H1 (cell line): ENCODE measurements at regions of chr19 and their contacts with region 1.

Region 1: DNA sequence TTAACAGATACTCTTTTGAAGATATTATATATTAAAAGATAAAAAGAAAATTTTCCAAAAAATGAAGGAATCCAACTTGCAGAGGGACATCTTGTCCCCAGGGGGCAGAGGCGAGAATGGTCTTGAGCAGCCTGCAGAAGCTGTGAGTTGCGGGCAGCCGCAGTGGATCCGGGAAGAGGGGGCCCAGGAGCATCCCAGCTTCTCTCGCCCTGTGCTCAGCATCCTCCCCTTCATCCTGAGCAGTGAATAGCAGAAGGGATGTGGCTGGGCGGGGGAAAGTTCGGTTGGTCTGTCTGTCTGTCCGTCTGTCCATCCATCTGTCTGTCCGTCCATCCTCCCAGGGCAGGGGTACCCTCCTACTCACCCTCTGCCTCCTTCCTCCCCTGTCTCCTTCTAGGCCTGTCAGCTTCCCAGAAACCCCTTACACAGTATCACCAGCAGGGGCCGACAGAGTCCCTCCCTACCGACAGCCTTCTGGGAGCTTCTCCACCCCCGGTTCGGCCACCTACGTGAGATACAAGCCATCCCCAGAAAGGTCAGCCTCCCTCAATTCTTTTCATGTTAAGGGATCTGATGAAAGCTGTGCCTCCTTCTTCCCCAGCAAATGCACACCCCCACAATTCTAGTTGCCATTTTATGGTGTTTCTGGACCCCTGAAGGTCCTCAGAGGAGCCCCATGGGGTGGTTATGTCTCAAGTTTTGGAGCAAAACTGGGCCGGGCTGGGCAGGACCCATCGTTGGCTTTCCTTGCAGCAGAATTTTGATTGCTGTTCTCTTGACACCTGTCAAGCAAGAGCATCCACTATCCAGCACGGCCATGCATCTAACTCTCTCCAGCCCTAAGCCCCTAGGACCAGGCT is 81.6 kb downstream of the DPF1 start:
- DNase-seq: peak; percentile 41 to 85
- H3K4me3 ChIP-seq: no peak overlapping the region
- H3K27ac ChIP-seq: no peak overlapping the region
- H3K4me1 ChIP-seq: no peaks in the 10 kb centered on the region; a peak in 1 of 7 replicates
- H3K27me3 ChIP-seq: no peaks in the 10 kb centered on the region
- CTCF ChIP-seq: peak; percentile 88 to 95 (median 92)
- EP300 ChIP-seq: no peak
- POLR2A ChIP-seq: no peak
- RAD21 ChIP-seq: peak; percentile 89 to 94

Region 2: GRCh38 chr19:38033658-38034498 is 108.5 kb before region 1 on chr19:
- CTCF ChIA-PET with region 1: no interaction called
- POLR2A ChIA-PET with region 1: no interaction called
- DNase-seq: peak in 1 of 2 experiments; percentile 25
- H3K4me3 ChIP-seq: no peak overlapping the region
- H3K27ac ChIP-seq: peak overlapping the region; percentile 16; the same call in 1 of the 2 replicates
- H3K4me1 ChIP-seq: peaks cover 7 to 19% (median 14%) of the 10 kb centered on the region in 4 experiments
- H3K27me3 ChIP-seq: no peaks in the 10 kb centered on the region
- CTCF ChIP-seq: peak; percentile 32 to 55 (median 41)
- EP300 ChIP-seq: no peak
- POLR2A ChIP-seq: no peak
- RAD21 ChIP-seq: peak; percentile 40 to 48; a peak in 3 of 4 replicates

Region 3: DNA sequence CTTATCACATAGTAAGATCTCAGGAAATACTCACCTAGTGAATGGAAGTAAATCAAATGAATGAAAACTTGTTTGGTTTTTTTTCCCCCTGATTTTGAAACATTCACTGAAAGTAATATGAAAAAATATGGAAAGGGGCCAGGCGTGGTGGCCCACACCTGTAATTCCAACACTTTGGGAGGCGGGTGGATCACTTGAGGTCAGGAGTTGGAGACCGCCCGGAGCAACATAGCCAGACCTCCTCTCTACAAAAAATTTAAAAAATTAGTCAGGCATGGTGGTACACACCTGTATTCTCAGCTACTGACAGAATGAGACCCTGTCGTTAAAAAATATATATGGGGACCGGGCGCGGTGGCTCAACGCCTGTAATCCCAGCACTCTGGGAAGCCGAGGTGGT is 85.8 kb before region 1 on chr19:
- CTCF ChIA-PET with region 1: no interaction called
- POLR2A ChIA-PET with region 1: no interaction called
- DNase-seq: no peak
- H3K4me3 ChIP-seq: no peak overlapping the region
- H3K27ac ChIP-seq: no peak overlapping the region
- H3K4me1 ChIP-seq: peaks cover 3 to 29% (median 19%) of the 10 kb centered on the region in 4 experiments
- H3K27me3 ChIP-seq: no peaks in the 10 kb centered on the region
- CTCF ChIP-seq: no peak
- EP300 ChIP-seq: no peak
- POLR2A ChIP-seq: no peak
- RAD21 ChIP-seq: no peak

Region 4: DNA sequence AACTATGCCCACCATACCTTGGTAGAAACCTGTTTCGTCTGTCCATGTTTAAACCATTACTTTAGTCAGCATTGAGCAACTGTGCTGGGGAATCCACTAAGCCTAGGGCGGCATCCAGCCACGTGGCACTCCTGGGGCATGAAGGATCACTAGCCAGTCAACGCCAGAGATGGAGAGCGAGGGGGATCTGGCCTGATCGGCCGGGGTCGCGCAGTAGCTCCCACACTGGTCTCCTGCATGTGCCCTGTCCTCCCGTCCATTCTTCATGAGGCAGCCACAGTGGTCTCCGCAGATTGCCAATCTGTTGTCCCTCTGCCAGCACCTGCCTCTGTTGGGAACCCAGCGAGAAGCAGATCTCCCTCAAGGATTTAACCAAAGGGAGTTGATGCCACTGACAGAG is 27.8 kb before region 1 on chr19:
- CTCF ChIA-PET with region 1: interaction called, 13 read pairs
- POLR2A ChIA-PET with region 1: interaction called, 3 read pairs
- DNase-seq: no peak
- H3K4me3 ChIP-seq: no peak overlapping the region
- H3K27ac ChIP-seq: no peak overlapping the region
- H3K4me1 ChIP-seq: no peaks in the 10 kb centered on the region
- H3K27me3 ChIP-seq: no peaks in the 10 kb centered on the region; a peak in 1 of 7 replicates
- CTCF ChIP-seq: no peak
- EP300 ChIP-seq: no peak
- POLR2A ChIP-seq: no peak
- RAD21 ChIP-seq: no peak

Region 5: GRCh38 chr19:38158730-38159129 is 16.3 kb after region 1 on chr19:
- CTCF ChIA-PET with region 1: interaction called, 41 read pairs
- POLR2A ChIA-PET with region 1: no interaction called
- DNase-seq: no peak
- H3K4me3 ChIP-seq: no peak overlapping the region
- H3K27ac ChIP-seq: no peak overlapping the region
- H3K4me1 ChIP-seq: no peaks in the 10 kb centered on the region
- H3K27me3 ChIP-seq: no peaks in the 10 kb centered on the region
- CTCF ChIP-seq: no peak
- EP300 ChIP-seq: no peak
- POLR2A ChIP-seq: no peak
- RAD21 ChIP-seq: no peak

Region 6: DNA sequence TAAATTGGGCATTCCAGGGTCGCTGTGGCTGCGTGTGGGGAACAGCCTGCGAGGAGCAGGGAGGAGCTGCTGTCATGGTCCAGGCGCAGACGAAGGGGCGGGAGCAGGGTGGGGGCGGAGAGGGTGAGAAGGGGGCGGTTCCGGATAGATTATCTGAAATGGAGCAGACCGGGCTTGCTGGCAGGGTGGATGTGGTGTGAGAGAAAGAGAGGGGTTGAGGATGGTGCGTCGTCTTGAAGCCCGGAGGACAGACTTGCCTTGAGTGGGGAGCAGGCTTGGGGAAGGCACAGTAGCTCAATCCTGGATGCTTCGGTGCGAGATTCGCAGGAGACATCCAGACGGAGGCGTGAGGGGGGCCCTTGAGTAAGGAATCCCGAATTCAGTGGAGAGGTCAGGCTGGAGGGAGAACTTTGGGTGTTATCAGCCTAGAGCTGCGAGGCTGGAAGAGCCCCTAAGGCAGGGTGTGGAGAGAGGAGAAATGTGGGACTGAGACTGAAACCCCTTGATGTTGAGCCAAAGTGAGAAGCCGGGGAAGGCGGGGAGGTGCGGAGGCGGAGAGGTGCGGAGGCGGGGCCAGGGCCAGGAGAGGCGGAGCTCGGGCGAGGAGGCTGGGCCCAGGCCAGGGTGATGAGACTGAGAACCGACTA is 41.0 kb after region 1 on chr19:
- CTCF ChIA-PET with region 1: interaction called, 20 read pairs
- POLR2A ChIA-PET with region 1: no interaction called
- DNase-seq: peak; percentile 27 to 93
- H3K4me3 ChIP-seq: peak overlapping the region; percentile 18 to 62 (median 55); a peak in 7 of 8 replicates
- H3K27ac ChIP-seq: no peak overlapping the region
- H3K4me1 ChIP-seq: peaks cover 0 to 13% (median 7%) of the 10 kb centered on the region in 4 experiments; a peak in 6 of 7 replicates
- H3K27me3 ChIP-seq: no peaks in the 10 kb centered on the region
- CTCF ChIP-seq: no peak
- EP300 ChIP-seq: no peak
- POLR2A ChIP-seq: 0 out of 3 replicates have a peak, but pooled peaks of 1 of the 2 experiments have one; percentile 20
- RAD21 ChIP-seq: no peak; a peak in 1 of 4 replicates

Region 7: GRCh38 chr19:38224014-38224862 is 81.8 kb after region 1 on chr19 and contains the start of gene DPF1:
- CTCF ChIA-PET with region 1: interaction called, 20 read pairs
- POLR2A ChIA-PET with region 1: no interaction called
- DNase-seq: peak in 1 of 2 experiments; percentile 94
- H3K4me3 ChIP-seq: peak within 1 kb of the TSS; percentile 44 to 74 (median 52)
- H3K27ac ChIP-seq: no peak within 1 kb of the TSS
- H3K4me1 ChIP-seq: peaks cover 6 to 17% (median 14%) of the 10 kb centered on the region in 4 experiments
- H3K27me3 ChIP-seq: peaks cover 0 to 8% (median 4%) of the 10 kb centered on the region in 4 experiments; a peak in 3 of 7 replicates
- CTCF ChIP-seq: peak; percentile 62 to 66 (median 63)
- EP300 ChIP-seq: no peak
- POLR2A ChIP-seq: no peak
- RAD21 ChIP-seq: peak; percentile 20 to 50; a peak in 3 of 4 replicates
- total RNA-seq, gene DPF1: 15.2 and 15.6 TPM in 2 replicates